ENCODE measurements at regions of chr2 and their contacts with region 1.

Region 1: DNA sequence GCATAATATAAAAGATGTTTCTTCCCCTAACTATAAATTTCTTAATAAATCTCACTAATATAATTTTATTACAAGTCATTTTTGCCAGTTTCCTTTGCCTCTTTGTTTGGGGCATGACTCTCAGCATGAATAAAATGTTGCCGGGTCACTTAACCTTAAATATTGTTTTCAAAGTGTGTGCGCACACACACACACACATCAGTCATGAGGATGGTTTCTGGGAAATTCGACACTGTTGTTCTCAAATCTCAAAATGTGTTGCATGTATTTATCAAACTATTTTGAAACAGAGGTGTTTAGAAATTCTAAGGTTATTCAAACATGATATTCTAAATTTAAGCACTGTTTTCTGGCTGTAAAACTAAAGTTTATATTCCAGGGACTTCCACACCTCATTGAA is 31.5 kb downstream of the FAP start:
- DNase-seq: no peak
- ATAC-seq: no peak
- H3K4me3 ChIP-seq: no peak overlapping the region
- H3K4me3 Mint-ChIP-seq: no peak overlapping the region
- H3K27ac ChIP-seq: no peak overlapping the region
- H3K27ac Mint-ChIP-seq: no peak overlapping the region
- H3K4me1 ChIP-seq: no peaks in the 10 kb centered on the region
- H3K4me1 Mint-ChIP-seq: no peaks in the 10 kb centered on the region
- H3K27me3 ChIP-seq: no peaks in the 10 kb centered on the region
- H3K27me3 Mint-ChIP-seq: peaks cover 5% of the 10 kb centered on the region
- CTCF ChIP-seq: no peak

Region 2: DNA sequence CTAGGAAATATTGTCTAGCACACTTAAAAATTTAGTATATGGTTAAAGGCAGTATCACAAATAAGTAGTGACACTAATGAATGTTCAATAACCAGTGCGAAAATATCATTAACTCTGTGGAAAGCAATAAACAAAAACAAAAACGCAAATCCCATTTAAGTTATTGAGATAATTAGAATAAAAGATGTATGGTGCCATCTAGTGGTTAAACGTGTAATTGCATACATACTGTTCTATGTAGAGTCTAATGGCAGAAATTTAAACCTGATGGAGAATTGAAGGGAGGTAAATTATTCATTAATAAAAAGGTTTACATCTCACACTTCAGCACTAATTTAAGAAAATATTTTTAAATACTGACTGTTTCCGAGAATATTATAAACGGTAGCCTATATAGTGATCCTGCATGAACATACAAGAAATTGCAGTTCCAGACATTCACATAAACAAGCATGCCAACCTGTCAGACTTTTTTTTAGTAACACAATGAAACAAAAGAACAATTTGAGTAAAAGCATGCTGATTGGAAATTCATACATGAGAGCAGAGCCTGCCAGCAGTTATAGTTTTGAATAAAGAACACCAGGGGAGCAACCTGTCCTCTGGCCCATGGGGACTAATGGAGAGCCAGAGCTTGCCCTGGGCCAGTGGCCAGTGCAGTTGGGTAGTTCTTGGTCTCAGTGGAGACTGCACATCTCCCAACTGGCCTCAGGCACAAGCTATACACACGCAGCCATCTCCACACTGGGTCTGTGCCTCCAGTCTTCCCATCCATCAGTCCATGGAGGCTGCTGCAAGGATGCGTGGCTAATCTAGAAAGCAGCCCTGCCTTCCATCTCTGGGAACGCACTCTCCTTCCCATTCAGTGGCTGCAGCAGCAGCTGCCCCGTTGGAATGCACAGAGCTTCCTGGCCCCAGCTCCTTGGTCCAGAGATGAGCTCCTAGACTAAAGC is 87.7 kb before region 1 on chr2:
- CTCF ChIA-PET with region 1: no interaction called
- POLR2A ChIA-PET with region 1: no interaction called
- intact Hi-C with region 1: no loop called
- DNase-seq: peak in 3 of 14 experiments; percentile 74 to 83 (median 80)
- ATAC-seq: peak; percentile 69
- H3K4me3 ChIP-seq: no peak overlapping the region
- H3K4me3 Mint-ChIP-seq: no peak overlapping the region
- H3K27ac ChIP-seq: no peak overlapping the region
- H3K27ac Mint-ChIP-seq: no peak overlapping the region
- H3K4me1 ChIP-seq: no peaks in the 10 kb centered on the region
- H3K4me1 Mint-ChIP-seq: peaks cover 20% of the 10 kb centered on the region
- H3K27me3 ChIP-seq: no peaks in the 10 kb centered on the region
- H3K27me3 Mint-ChIP-seq: no peaks in the 10 kb centered on the region
- CTCF ChIP-seq: peak; percentile 91

Region 3: DNA sequence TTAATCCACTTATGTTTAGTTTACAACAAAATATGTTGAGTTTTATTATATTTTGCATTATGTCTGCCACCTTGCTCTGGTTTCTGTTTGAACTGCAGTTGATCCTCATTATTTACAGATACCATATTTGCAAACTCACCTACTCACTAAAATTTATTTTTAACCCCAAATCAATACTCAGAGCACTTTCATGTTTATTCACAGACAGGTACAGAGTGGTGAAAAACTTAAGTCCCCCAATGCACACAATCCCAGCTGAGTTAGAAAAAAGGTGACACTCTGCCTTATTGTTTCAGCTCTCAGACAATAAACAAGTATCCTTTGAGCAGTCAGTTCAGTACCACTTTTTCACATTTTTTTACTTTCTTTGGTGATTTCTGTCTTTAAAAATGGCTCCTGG is 73.4 kb before region 1 on chr2:
- CTCF ChIA-PET with region 1: no interaction called
- POLR2A ChIA-PET with region 1: no interaction called
- intact Hi-C with region 1: no loop called
- DNase-seq: no peak
- ATAC-seq: no peak
- H3K4me3 ChIP-seq: no peak overlapping the region
- H3K4me3 Mint-ChIP-seq: no peak overlapping the region
- H3K27ac ChIP-seq: no peak overlapping the region
- H3K27ac Mint-ChIP-seq: no peak overlapping the region
- H3K4me1 ChIP-seq: no peaks in the 10 kb centered on the region
- H3K4me1 Mint-ChIP-seq: no peaks in the 10 kb centered on the region
- H3K27me3 ChIP-seq: peaks cover 5 to 6% of the 10 kb centered on the region in 2 experiments
- H3K27me3 Mint-ChIP-seq: peaks cover 27% of the 10 kb centered on the region
- CTCF ChIP-seq: no peak

Region 4: GRCh38 chr2:162198239-162198638 is 13.5 kb before region 1 on chr2:
- CTCF ChIA-PET with region 1: no interaction called
- POLR2A ChIA-PET with region 1: no interaction called
- intact Hi-C with region 1: loop called in 1 of 2 experiments (anchors 1 kb)
- DNase-seq: no peak
- ATAC-seq: no peak
- H3K4me3 ChIP-seq: no peak overlapping the region
- H3K4me3 Mint-ChIP-seq: no peak overlapping the region
- H3K27ac ChIP-seq: no peak overlapping the region
- H3K27ac Mint-ChIP-seq: no peak overlapping the region
- H3K4me1 ChIP-seq: no peaks in the 10 kb centered on the region
- H3K4me1 Mint-ChIP-seq: no peaks in the 10 kb centered on the region
- H3K27me3 ChIP-seq: peaks cover 4 to 10% of the 10 kb centered on the region in 2 experiments
- H3K27me3 Mint-ChIP-seq: peaks cover 55% of the 10 kb centered on the region
- CTCF ChIP-seq: no peak